Gastrocnemius medialis (tissue), 4 donors: ENCODE measurements at regions of chr2 and their contacts with region 1.

Region 1: GRCh38 chr2:237256887-237257286 is 157.1 kb downstream of the COL6A3 start:
- DNase-seq: peak; percentile 50 to 59
- ATAC-seq: peak; percentile 65 to 66
- H3K4me3 ChIP-seq: no peak overlapping the region
- H3K27ac ChIP-seq: peak overlapping the region; percentile 59 to 73 (median 65)
- H3K4me1 ChIP-seq: no peaks in the 10 kb centered on the region
- H3K27me3 ChIP-seq: no peaks in the 10 kb centered on the region
- CTCF ChIP-seq: no peak
- POLR2A ChIP-seq: peak in 1 of 2 donors; percentile 30

Region 2: GRCh38 chr2:237178396-237178795 is 78.5 kb before region 1 on chr2:
- in situ Hi-C with region 1: no loop called
- intact Hi-C with region 1: loop called (anchors 5 kb)
- DNase-seq: no peak
- ATAC-seq: no peak
- H3K4me3 ChIP-seq: no peak overlapping the region
- H3K27ac ChIP-seq: no peak overlapping the region
- H3K4me1 ChIP-seq: no peaks in the 10 kb centered on the region
- H3K27me3 ChIP-seq: no peaks in the 10 kb centered on the region
- CTCF ChIP-seq: no peak
- POLR2A ChIP-seq: no peak

Region 3: DNA sequence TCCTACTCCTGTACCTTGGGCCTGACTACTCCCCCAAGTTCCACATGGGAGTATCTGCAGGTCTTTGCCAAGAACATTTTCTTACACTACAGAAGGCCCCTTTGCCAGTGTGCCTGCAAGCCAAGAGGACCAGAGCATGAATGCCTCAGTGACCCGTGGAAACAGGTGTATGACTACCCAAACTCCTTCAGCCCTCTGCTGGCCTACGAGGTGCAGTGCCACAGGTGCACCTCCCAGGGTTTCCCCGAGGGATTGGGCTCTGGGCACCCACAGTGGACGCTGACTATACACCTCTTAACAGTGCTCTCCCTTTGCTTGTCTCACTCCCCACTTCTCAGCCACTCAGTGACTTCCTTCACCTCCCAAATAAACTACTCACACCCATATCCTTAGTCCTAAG is 65.7 kb after region 1 on chr2:
- in situ Hi-C with region 1: no loop called
- intact Hi-C with region 1: loop called (anchors 5 kb)
- DNase-seq: no peak
- ATAC-seq: peak in 1 of 2 donors; percentile 42
- H3K4me3 ChIP-seq: no peak overlapping the region
- H3K27ac ChIP-seq: peak overlapping the region; percentile 48 to 72 (median 60)
- H3K4me1 ChIP-seq: peaks cover 12 to 31% of the 10 kb centered on the region in 2 donors
- H3K27me3 ChIP-seq: no peaks in the 10 kb centered on the region
- CTCF ChIP-seq: peak; percentile 12 to 57 (median 45)
- POLR2A ChIP-seq: no peak